ENCODE measurements at regions of chr20 and their contacts with region 1.

Region 1: DNA sequence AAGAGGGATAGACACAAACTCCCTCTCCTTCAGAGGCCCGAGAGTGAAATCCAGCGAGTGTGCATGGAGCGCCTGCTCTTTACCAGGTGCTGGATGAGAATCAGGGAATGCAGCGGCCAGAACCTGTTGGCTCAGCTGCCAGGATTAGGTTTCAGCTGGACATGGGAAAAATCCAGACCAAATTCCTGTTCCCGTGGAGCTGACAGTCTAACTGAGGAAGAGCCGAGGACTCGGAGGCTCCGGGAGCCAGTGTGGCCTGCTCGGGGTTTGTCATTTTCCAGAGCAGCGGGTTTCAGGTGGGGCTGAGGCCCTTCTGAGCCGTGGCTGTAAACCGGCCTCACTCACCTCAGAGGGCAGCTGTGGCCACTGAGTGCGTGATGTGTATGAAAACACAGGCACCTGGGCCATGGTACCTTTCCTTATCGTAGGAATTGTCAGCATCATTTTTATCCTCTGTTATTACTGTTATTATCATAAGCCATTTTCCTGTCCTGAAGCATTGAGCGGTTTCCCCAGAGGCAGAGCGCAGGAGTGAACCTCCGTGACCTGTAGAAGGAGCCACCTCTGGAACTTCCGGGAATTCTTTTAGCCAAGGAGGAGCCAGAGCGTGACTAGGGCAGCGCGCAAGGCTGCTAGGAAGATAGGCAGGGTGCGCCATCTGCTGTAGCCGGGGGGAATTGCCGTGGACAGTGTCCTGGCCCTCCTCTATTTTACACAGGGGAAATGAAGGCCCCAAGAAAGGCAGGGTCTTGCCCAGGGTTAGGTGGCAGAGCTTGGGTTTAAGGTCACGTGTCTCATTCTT is 27.3 kb downstream of the PKIG start:
- DNase-seq: peak; percentile 88 to 97
- ATAC-seq: peak; percentile 97
- H3K4me3 ChIP-seq: no peak overlapping the region
- H3K27ac ChIP-seq: peak overlapping the region; percentile 32 to 90
- H3K4me1 ChIP-seq: no peaks in the 10 kb centered on the region
- H3K27me3 ChIP-seq: no peaks in the 10 kb centered on the region

Region 2: GRCh38 chr20:44210422-44211176 is 399.1 kb before region 1 on chr20 and contains the start of gene OSER1:
- intact Hi-C with region 1: loop called (anchors 5 to 10 kb)
- DNase-seq: peak; percentile 98 to 99
- ATAC-seq: peak; percentile 98
- H3K4me3 ChIP-seq: peak within 1 kb of the TSS; percentile 79 to 92
- H3K27ac ChIP-seq: peak within 1 kb of the TSS; percentile 78 to 92
- H3K4me1 ChIP-seq: peaks cover 0 to 7% of the 10 kb centered on the region in 2 donors
- H3K27me3 ChIP-seq: no peaks in the 10 kb centered on the region
- total RNA-seq, gene OSER1: 26.7 to 34.2 TPM

Region 3: DNA sequence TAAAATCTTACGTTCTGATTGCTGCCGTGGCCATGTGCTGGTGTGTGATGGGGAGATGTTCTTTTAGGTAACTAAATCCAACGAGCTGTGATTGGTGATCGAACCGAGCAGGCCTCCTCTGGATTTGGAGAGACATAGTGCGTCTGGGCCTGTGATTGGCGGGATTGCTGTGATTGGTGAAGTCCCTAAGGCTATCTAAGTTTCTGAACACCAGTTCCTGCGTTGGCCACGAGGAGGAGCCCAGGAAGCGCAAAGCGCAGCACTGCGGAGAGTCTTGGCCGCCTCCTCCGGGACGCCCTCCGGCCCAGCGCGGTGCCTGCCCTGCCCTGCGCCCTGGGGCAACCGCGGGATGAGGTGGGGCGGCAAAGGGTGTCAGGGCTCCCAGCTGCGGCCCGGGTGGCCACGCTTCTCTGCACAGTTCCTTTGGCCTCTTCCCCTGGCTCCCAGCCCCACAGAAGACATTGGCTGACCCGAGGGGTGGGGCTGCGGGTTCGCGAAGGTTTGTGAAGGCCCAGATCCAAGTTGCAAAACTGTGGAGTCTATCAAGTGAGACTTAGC is 221.2 kb before region 1 on chr20:
- intact Hi-C with region 1: loop called in 1 of 2 experiments (anchors 5 kb)
- DNase-seq: peak; percentile 70 to 88
- ATAC-seq: peak; percentile 68
- H3K4me3 ChIP-seq: no peak overlapping the region
- H3K27ac ChIP-seq: no peak overlapping the region
- H3K4me1 ChIP-seq: no peaks in the 10 kb centered on the region
- H3K27me3 ChIP-seq: no peaks in the 10 kb centered on the region

Region 4: DNA sequence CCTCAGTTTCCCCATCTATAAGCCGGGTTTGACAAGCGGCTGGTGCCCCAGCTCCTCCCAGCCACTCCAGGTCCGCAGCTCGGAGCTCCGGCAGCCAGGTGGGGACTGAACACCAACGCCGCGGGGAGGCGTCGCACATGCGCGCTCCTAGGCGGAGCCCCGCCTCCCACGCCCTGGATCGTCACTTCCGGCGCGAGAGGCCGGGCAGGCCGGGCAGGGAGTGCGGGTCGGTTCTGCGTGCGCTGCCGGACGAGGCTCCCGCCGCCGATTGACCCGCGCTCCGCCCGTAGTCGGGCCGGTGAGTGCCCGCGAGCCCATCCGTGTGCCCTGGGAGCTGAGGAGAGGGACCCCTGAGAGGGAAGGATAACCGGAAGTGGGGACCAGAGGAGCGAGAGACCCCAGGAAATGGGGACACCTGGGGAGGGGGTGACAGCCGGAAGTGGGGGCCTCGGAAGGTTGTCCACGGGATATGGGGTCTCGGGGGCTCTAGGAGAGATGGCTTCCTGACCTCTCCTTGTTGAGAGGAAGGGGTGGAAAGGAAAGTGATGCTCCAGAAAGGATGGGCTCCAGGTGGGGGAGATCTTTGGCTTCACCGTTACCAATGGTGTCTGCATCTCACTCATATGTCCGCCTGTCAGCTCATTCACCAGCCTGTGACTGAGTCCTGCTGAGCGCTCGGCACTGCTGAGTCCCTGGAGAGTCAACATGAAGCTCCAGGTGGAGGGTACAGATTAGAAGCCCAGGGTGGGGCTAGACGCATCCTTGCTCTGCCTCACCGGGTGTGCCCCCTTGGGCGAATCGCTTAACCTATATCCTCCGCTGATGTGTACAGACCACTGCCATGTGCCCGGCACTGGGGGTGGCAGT is 133.8 kb before region 1 on chr20 and contains the start of gene TTPAL:
- intact Hi-C with region 1: loop called (anchors 5 kb)
- DNase-seq: peak; percentile 89 to 96
- ATAC-seq: peak; percentile 97
- H3K4me3 ChIP-seq: peak within 1 kb of the TSS; percentile 50 to 55
- H3K27ac ChIP-seq: peak within 1 kb of the TSS; percentile 51 to 60
- H3K4me1 ChIP-seq: no peaks in the 10 kb centered on the region
- H3K27me3 ChIP-seq: no peaks in the 10 kb centered on the region
- total RNA-seq, gene TTPAL: 7.6 to 11.8 TPM

Region 5: GRCh38 chr20:44532259-44532980 is 77.3 kb before region 1 on chr20:
- intact Hi-C with region 1: loop called (anchors 5 kb)
- DNase-seq: no peak
- ATAC-seq: no peak
- H3K4me3 ChIP-seq: peak overlapping the region; percentile 83 to 87
- H3K27ac ChIP-seq: peak overlapping the region in 1 of 2 donors; percentile 45
- H3K4me1 ChIP-seq: no peaks in the 10 kb centered on the region
- H3K27me3 ChIP-seq: no peaks in the 10 kb centered on the region

Region 6: GRCh38 chr20:44572541-44573500 is 36.9 kb before region 1 on chr20:
- intact Hi-C with region 1: loop called in 1 of 2 experiments (anchors 2 kb)
- DNase-seq: no peak
- ATAC-seq: peak; percentile 70
- H3K4me3 ChIP-seq: no peak overlapping the region
- H3K27ac ChIP-seq: peak overlapping the region; percentile 38 to 96
- H3K4me1 ChIP-seq: no peaks in the 10 kb centered on the region
- H3K27me3 ChIP-seq: no peaks in the 10 kb centered on the region

Region 7: DNA sequence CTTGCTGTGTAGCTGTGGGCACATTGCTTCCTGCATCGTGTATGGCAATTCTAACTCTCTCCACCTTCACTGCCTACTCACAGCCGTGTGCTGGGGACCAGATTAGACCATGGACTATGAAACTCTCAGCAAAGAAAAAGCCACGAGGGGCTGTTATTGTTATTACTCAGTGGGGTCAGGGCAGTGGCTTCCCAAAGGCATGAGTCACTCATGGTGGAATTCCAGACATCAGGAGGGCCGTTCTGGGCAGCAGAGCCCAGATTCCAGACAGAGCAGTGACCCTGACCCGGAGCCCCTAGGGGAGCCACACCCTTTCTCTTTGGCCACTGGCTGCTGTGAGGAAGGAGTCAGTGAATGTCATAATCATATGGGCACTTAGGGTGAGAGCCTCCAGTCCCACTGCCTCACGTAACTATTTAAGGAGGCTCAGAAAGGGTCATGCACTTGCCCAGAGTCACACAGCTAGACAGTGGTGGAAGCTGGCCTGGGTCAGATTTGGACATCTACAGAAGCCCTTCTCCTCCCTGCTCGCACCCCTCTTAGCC is 83.3 kb after region 1 on chr20:
- intact Hi-C with region 1: no loop called
- DNase-seq: peak; percentile 94
- ATAC-seq: peak; percentile 95
- H3K4me3 ChIP-seq: no peak overlapping the region
- H3K27ac ChIP-seq: peak overlapping the region; percentile 93 to 100
- H3K4me1 ChIP-seq: peaks cover 6 to 11% of the 10 kb centered on the region in 2 donors
- H3K27me3 ChIP-seq: no peaks in the 10 kb centered on the region

Region 8: DNA sequence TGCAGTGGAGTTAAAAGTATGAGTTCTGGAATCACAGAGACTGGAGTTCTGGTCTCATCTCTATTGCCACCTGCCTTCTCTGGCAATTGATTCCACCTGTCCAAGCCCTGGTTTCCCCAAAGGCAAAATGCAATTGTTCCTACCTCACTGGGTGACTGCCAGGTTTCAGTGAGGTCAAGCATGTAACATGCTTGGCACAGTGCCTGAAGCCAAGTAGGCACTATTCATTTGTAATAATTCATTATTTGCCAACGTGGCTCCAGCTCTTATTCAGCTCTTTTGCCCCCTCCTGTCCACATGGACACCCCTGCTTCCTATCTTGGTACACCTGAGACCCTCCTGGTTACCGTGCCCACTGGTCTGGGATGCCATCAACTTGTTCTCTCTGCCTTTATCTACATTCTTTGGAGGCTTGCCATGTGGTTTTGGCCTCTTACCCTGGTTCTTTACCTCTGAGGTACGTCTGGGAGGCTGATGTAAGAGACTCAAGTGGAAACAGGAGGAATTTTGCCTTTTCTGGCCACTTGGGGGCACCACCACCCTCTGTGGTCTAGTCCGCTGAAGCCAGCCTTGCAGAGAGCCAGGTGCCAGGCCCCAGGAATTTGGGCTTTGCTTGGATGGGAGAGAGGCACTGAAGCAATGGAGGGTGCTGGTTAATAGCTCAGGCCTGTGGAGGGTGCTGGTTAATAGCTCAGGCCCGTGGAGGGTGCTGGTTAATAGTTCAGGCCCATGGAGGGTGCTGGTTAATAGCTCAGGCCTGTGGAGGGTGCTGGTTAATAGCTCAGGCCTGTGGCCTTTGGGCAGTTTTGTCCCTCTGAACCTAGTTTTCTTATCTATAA is 137.7 kb after region 1 on chr20:
- intact Hi-C with region 1: loop called in 1 of 2 experiments (anchors 5 kb)
- DNase-seq: peak; percentile 85 to 92
- ATAC-seq: peak; percentile 73
- H3K4me3 ChIP-seq: peak overlapping the region in 1 of 2 donors; percentile 18
- H3K27ac ChIP-seq: peak overlapping the region in 1 of 2 donors; percentile 18
- H3K4me1 ChIP-seq: peaks cover 0 to 5% of the 10 kb centered on the region in 2 donors
- H3K27me3 ChIP-seq: no peaks in the 10 kb centered on the region

Measured in aorta (tissue), 5 donors.